ENCODE measurements at regions of chr20 and their contacts with region 1.

Region 1: GRCh38 chr20:18650224-18650623 is 62.4 kb downstream of the DTD1 start:
- DNase-seq: no peak
- ATAC-seq: no peak
- H3K4me3 ChIP-seq: no peak overlapping the region
- H3K27ac ChIP-seq: no peak overlapping the region
- H3K4me1 ChIP-seq: peaks cover 9% of the 10 kb centered on the region
- CTCF ChIP-seq: no peak
- EP300 ChIP-seq: no peak
- POLR2A ChIP-seq: no peak
- RAD21 ChIP-seq: no peak

Region 2: DNA sequence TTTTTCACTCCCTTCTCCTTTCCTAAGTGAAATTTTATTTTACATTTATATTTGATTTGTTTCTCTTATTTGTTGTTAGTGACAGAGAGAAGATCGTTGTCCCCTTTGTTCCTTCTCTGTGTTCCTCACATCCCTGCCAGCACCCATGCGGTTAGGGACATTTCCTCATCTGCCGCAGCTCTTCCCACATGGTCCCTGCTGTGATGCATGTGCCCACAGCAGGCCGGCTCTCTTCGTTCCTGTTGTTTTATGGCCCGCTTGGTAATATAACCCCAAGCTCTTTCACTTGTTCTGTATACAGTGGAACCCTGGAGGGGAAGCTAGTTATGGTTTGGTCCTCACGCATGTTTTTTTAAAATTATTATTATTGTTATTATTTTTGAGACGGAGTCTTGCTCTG is 38.7 kb before region 1 on chr20:
- CTCF ChIA-PET with region 1: no interaction called
- POLR2A ChIA-PET with region 1: no interaction called
- DNase-seq: no peak
- ATAC-seq: no peak
- H3K4me3 ChIP-seq: no peak overlapping the region
- H3K27ac ChIP-seq: no peak overlapping the region
- H3K4me1 ChIP-seq: no peaks in the 10 kb centered on the region
- CTCF ChIP-seq: no peak
- EP300 ChIP-seq: no peak
- POLR2A ChIP-seq: no peak
- RAD21 ChIP-seq: no peak

Region 3: GRCh38 chr20:18632196-18633009 is 17.8 kb before region 1 on chr20:
- CTCF ChIA-PET with region 1: interaction called, 16 read pairs
- POLR2A ChIA-PET with region 1: no interaction called
- DNase-seq: peak; percentile 63 to 70
- ATAC-seq: peak; percentile 95 to 99
- H3K4me3 ChIP-seq: no peak overlapping the region
- H3K27ac ChIP-seq: no peak overlapping the region
- H3K4me1 ChIP-seq: no peaks in the 10 kb centered on the region
- CTCF ChIP-seq: peak; percentile 94
- EP300 ChIP-seq: no peak
- POLR2A ChIP-seq: no peak
- RAD21 ChIP-seq: peak; percentile 94 to 98

Region 4: DNA sequence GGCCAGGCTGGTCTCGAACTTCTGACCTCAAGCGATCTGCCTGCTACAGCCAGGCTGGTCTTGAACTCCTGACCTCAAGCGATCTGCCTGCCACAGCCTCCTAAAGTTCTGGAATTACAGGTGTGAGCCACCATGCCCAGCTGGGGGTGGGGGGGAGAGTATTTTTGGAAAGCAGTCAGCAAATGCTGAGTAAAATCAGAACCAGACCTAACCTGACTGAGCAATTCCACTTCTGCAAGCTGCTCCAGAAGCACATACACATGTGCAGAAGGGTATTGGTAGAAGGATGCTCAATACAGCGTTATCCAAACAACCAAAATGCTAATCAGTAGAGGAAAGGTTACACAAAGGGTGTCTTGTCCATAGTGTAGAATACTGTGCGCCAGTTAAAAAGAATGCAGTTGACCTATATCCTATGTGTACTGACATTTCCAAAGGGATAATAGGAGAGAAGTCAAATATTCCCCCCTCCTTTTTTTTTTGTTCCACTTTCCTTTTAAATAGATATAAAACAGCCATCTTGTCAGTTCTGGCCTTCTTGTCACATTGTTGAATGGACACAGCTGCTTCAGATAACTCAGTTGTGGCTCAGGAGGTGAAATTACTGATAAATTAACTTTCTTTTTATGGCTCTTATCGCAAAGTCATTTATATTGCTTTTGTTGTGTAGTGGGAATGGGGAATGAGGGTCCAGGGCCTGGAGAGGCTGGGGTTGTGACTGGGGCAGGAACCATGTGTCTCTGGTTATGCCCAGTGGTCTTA is 12.2 kb after region 1 on chr20:
- CTCF ChIA-PET with region 1: no interaction called
- POLR2A ChIA-PET with region 1: no interaction called
- DNase-seq: no peak
- ATAC-seq: no peak
- H3K4me3 ChIP-seq: no peak overlapping the region
- H3K27ac ChIP-seq: no peak overlapping the region
- H3K4me1 ChIP-seq: peaks cover 3% of the 10 kb centered on the region; the same call in 1 of the 3 replicates
- CTCF ChIP-seq: no peak
- EP300 ChIP-seq: no peak
- POLR2A ChIP-seq: no peak
- RAD21 ChIP-seq: no peak

Measured in A549 (cell line).